Naive thymus-derived CD4-positive, alpha-beta T cell (primary cell): ENCODE measurements at regions of chr11 and their contacts with region 1.

Region 1: GRCh38 chr11:126122863-126123262 is 60.2 kb upstream of the CDON start:
- DNase-seq: no peak
- ATAC-seq: no peak
- H3K4me3 ChIP-seq: no peak overlapping the region
- H3K4me3 Mint-ChIP-seq: no peak overlapping the region
- H3K27ac ChIP-seq: no peak overlapping the region
- H3K27ac Mint-ChIP-seq: no peak overlapping the region
- H3K4me1 ChIP-seq: no peaks in the 10 kb centered on the region
- H3K4me1 Mint-ChIP-seq: no peaks in the 10 kb centered on the region
- H3K27me3 ChIP-seq: no peaks in the 10 kb centered on the region
- H3K27me3 Mint-ChIP-seq: no peaks in the 10 kb centered on the region

Region 2: GRCh38 chr11:125941619-125942611 is 180.9 kb before region 1 on chr11:
- CTCF ChIA-PET with region 1: no interaction called
- POLR2A ChIA-PET with region 1: no interaction called
- intact Hi-C with region 1: loop called in 1 of 2 experiments (anchors 1 kb)
- DNase-seq: peak in 7 of 9 donors; percentile 8 to 49 (median 37)
- ATAC-seq: peak; percentile 65
- H3K4me3 ChIP-seq: no peak overlapping the region
- H3K4me3 Mint-ChIP-seq: peak overlapping the region in 6 of 10 donors; percentile 28 to 63 (median 40)
- H3K27ac ChIP-seq: no peak overlapping the region
- H3K27ac Mint-ChIP-seq: peak overlapping the region in 1 of 9 donors; percentile 18
- H3K4me1 ChIP-seq: no peaks in the 10 kb centered on the region
- H3K4me1 Mint-ChIP-seq: peaks cover 7 to 21% (median 16%) of the 10 kb centered on the region in 7 donors
- H3K27me3 ChIP-seq: no peaks in the 10 kb centered on the region
- H3K27me3 Mint-ChIP-seq: no peaks in the 10 kb centered on the region

Region 3: DNA sequence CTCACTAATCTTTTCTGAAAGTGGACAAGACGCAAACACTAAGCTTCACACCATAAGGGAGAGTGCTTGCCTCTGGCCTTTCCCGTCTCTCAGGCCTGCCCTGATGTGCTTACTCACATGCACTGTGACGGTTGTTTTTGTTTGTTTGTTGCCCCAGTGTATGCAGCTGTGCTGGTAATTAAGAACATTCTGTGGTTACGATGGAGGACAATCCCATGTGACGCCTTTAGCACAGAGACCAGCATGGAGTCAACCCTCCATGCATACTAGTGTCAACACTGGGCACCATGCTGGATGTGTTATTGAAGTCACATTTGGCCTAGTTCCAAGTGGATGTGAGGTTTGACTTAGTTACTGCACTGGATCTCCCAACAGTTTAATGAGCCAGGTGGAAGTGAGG is 32.4 kb before region 1 on chr11:
- CTCF ChIA-PET with region 1: no interaction called
- POLR2A ChIA-PET with region 1: interaction called, 10 read pairs
- intact Hi-C with region 1: no loop called
- DNase-seq: no peak
- ATAC-seq: no peak
- H3K4me3 ChIP-seq: no peak overlapping the region
- H3K4me3 Mint-ChIP-seq: no peak overlapping the region
- H3K27ac ChIP-seq: no peak overlapping the region
- H3K27ac Mint-ChIP-seq: no peak overlapping the region
- H3K4me1 ChIP-seq: peaks cover 0 to 2% of the 10 kb centered on the region in 2 donors
- H3K4me1 Mint-ChIP-seq: peaks cover 0 to 6% (median 1%) of the 10 kb centered on the region in 7 donors
- H3K27me3 ChIP-seq: no peaks in the 10 kb centered on the region
- H3K27me3 Mint-ChIP-seq: peaks cover 0 to 6% (median 0%) of the 10 kb centered on the region in 5 donors